GM10248 (cell line): ENCODE measurements at regions of chr2 and their contacts with region 1.

Region 1: GRCh38 chr2:130181325-130181879 is at the start of gene SMPD4:
- DNase-seq: peak; percentile 92
- CTCF ChIP-seq: no peak

Region 2: GRCh38 chr2:130169896-130170295 is 11.5 kb before region 1 on chr2:
- CTCF ChIA-PET with region 1: interaction called, 16 read pairs
- POLR2A ChIA-PET with region 1: interaction called, 12 read pairs
- DNase-seq: no peak
- CTCF ChIP-seq: no peak